Motor neuron (in vitro differentiated cells): ENCODE measurements at regions of chr19 and their contacts with region 1.

Region 1: GRCh38 chr19:18000935-18001778 is 6.8 kb upstream of the ARRDC2 start:
- ATAC-seq: peak; percentile 51 to 87 (median 56)
- H3K4me3 ChIP-seq: peak overlapping the region; percentile 27 to 38 (median 30)
- H3K27ac ChIP-seq: no peak overlapping the region
- H3K4me1 ChIP-seq: peaks cover 0 to 8% of the 10 kb centered on the region in 2 donors

Region 2: DNA sequence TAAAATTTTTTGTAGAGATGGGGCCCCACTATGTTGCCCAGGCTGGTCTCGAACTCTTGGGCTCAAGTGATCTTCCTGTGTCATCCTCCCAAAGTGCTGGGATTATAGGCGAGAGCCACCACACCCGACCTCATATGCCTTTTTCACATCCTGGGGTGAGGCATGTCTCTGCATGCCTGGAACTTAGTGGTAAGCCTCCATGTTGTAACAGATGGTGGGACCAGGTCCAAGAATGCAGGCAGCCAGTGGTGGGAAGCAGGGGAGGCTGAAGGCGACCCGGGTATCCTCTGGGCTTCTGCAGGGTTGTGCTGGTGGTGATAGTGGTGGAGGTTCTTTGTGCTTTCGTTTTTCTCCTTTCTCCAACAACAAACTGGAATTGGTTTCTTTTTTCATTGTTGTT is 98.5 kb before region 1 on chr19:
- in situ Hi-C with region 1: no loop called
- ATAC-seq: peak in 3 of 8 experiments; percentile 71 to 98 (median 97)
- H3K4me3 ChIP-seq: no peak overlapping the region
- H3K27ac ChIP-seq: no peak overlapping the region
- H3K4me1 ChIP-seq: no peaks in the 10 kb centered on the region

Region 3: DNA sequence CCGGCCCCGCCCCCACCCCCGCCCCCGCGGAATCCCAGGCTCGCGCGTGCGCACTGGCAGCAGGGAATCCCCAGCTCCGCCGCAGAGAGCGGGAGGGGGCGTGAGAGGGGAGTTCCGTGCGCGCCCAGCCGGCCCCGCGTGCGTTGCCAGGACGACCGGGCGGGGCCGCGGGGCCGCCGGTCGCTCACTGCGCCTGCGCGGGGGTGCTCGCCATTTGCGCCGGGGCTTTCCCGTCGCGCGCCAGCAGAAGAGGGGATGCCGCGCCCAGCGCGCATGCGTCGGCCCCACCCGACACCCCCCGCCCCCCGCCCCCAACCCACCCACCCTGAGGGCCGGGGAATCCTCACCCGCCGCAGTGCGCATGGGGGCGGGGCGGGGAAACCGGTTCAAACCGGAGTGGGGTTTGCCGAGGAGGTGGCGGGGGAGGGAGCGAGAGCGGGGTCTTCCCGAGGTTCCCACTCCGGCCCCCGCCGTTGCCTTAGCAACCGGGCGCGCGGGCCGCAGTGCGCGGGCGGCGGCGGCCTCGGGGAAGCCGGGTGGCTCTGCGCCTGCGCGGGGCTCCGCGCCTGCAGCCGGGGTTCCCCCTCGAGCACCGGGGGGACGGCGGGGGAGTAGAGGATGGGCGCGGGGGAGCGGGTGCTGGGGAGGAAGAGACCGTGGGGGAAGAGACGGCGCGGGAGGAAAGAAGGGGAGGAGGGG is 53.2 kb before region 1 on chr19:
- in situ Hi-C with region 1: loop called in 1 of 9 experiments (anchors 10 kb)
- ATAC-seq: peak; percentile 47 to 70 (median 58)
- H3K4me3 ChIP-seq: peak overlapping the region; percentile 13 to 33 (median 25)
- H3K27ac ChIP-seq: no peak overlapping the region
- H3K4me1 ChIP-seq: peaks cover 35 to 36% of the 10 kb centered on the region in 2 donors

Region 4: GRCh38 chr19:18058208-18059030 is 57.3 kb after region 1 on chr19:
- in situ Hi-C with region 1: loop called in 1 of 9 experiments (anchors 5 kb)
- ATAC-seq: peak; percentile 86 to 95 (median 92)
- H3K4me3 ChIP-seq: peak overlapping the region; percentile 8 to 20 (median 18)
- H3K27ac ChIP-seq: no peak overlapping the region
- H3K4me1 ChIP-seq: peaks cover 0 to 4% of the 10 kb centered on the region in 2 donors